CD4-positive, alpha-beta memory T cell (primary cell): ENCODE measurements at regions of chr17 and their contacts with region 1.

Region 1: GRCh38 chr17:43211480-43212402 is at the start of gene TMEM106A:
- DNase-seq: peak; percentile 72 to 76 (median 74)
- H3K4me3 ChIP-seq: peak within 1 kb of the TSS; percentile 82 to 86
- H3K4me3 Mint-ChIP-seq: peak within 1 kb of the TSS; percentile 92 to 100 (median 99)
- H3K27ac ChIP-seq: peak within 1 kb of the TSS; percentile 87
- H3K27ac Mint-ChIP-seq: peak within 1 kb of the TSS; percentile 84 to 99 (median 98)
- H3K4me1 ChIP-seq: peaks cover 22% of the 10 kb centered on the region
- H3K4me1 Mint-ChIP-seq: peaks cover 17 to 43% (median 28%) of the 10 kb centered on the region in 4 donors
- H3K27me3 ChIP-seq: no peaks in the 10 kb centered on the region
- H3K27me3 Mint-ChIP-seq: no peaks in the 10 kb centered on the region
- total RNA-seq, gene TMEM106A: 12.5 to 12.8 TPM

Region 2: DNA sequence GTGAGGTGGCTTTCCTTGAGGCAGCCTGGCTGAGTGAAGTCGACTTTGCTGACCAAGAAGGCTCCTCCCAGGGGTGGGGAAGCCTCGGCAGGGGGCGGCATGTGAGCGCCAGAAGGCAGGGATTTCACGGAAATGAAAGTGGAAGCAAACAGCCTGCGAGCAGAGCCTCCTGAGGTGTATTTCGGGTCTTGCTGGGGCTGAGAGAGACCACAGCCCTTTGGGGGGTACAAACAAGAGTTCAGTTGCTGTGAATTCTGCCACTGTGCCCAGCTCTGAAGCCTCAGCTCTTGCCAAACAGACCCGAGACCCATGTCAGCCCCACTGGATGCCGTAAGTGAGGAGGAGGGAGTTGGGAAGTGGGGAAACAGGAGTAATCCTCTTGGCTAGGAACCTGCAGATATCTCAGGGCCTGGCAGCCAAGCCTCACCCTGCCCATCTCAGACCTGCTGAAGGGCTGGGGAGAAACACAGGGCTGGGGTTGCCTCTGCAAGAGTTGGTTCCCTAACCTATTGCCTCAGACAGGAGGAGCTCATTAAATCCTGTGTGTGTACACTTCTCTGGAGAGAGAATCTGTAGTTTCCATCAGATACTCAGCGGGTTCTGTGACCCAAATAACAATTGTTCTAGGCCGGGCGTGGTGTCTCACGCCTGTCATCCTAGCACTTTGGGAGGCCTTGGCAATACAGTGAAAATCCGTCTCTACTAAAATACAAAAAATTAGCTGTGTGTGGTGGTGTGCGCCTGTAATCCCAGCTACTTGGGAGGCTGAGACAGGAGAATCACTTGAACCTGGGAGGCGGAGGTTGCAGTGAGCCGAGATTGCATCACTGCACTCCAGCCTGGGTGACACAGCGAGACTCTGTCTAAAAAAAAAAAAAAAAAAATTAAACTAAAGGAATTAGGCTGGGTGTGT is 204.8 kb before region 1 on chr17 and contains the start of gene IFI35:
- CTCF ChIA-PET with region 1: interaction called, 4 read pairs
- POLR2A ChIA-PET with region 1: no interaction called
- intact Hi-C with region 1: loop called (anchors 1 kb)
- DNase-seq: peak; percentile 81 to 89 (median 83)
- H3K4me3 ChIP-seq: peak within 1 kb of the TSS; percentile 94 to 95
- H3K4me3 Mint-ChIP-seq: peak within 1 kb of the TSS; percentile 100
- H3K27ac ChIP-seq: peak within 1 kb of the TSS; percentile 90
- H3K27ac Mint-ChIP-seq: peak within 1 kb of the TSS; percentile 96 to 100 (median 99)
- H3K4me1 ChIP-seq: peaks cover 21% of the 10 kb centered on the region
- H3K4me1 Mint-ChIP-seq: peaks cover 8 to 26% (median 17%) of the 10 kb centered on the region in 4 donors
- H3K27me3 ChIP-seq: no peaks in the 10 kb centered on the region
- H3K27me3 Mint-ChIP-seq: no peaks in the 10 kb centered on the region
- total RNA-seq, gene IFI35: 33.1 to 40.3 TPM

Region 3: DNA sequence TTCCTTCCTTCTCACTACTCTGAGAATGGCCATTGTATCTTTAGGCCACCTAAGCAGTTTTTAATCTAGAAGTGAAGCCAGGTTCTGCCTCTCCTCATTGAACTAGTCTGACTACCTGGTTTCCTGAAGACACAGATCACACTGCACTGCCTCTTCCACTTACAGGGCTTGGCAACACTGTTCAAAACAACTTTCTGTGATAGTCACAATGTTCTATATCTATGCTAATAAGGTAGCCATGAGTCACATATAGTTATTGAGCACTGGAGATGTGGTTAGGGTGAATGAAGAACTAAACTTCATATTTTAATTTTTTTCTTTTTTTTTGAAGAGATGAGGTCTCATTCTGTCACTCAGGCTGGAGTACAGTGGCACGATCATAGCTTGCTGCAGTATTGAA is 159.8 kb before region 1 on chr17:
- CTCF ChIA-PET with region 1: no interaction called
- POLR2A ChIA-PET with region 1: no interaction called
- intact Hi-C with region 1: no loop called
- DNase-seq: no peak
- H3K4me3 ChIP-seq: no peak overlapping the region
- H3K4me3 Mint-ChIP-seq: no peak overlapping the region
- H3K27ac ChIP-seq: no peak overlapping the region
- H3K27ac Mint-ChIP-seq: peak overlapping the region in 1 of 7 donors; percentile 12
- H3K4me1 ChIP-seq: no peaks in the 10 kb centered on the region
- H3K4me1 Mint-ChIP-seq: no peaks in the 10 kb centered on the region
- H3K27me3 ChIP-seq: no peaks in the 10 kb centered on the region
- H3K27me3 Mint-ChIP-seq: no peaks in the 10 kb centered on the region

Region 4: GRCh38 chr17:43125133-43125966 is 86.4 kb before region 1 on chr17 and contains the start of gene BRCA1:
- CTCF ChIA-PET with region 1: no interaction called
- POLR2A ChIA-PET with region 1: no interaction called
- intact Hi-C with region 1: loop called (anchors 5 kb)
- DNase-seq: peak; percentile 95 to 98 (median 97)
- H3K4me3 ChIP-seq: peak within 1 kb of the TSS; percentile 80 to 89
- H3K4me3 Mint-ChIP-seq: peak within 1 kb of the TSS; percentile 87 to 98 (median 96)
- H3K27ac ChIP-seq: peak within 1 kb of the TSS; percentile 72
- H3K27ac Mint-ChIP-seq: peak within 1 kb of the TSS; percentile 82 to 98 (median 96)
- H3K4me1 ChIP-seq: peaks cover 17% of the 10 kb centered on the region
- H3K4me1 Mint-ChIP-seq: peaks cover 19 to 35% (median 27%) of the 10 kb centered on the region in 4 donors
- H3K27me3 ChIP-seq: no peaks in the 10 kb centered on the region
- H3K27me3 Mint-ChIP-seq: no peaks in the 10 kb centered on the region
- total RNA-seq, gene BRCA1: 4.8 to 6.0 TPM

Region 5: GRCh38 chr17:43200127-43200526 is 11.6 kb before region 1 on chr17:
- CTCF ChIA-PET with region 1: interaction called, 5 read pairs
- POLR2A ChIA-PET with region 1: interaction called, 23 read pairs
- intact Hi-C with region 1: no loop called
- DNase-seq: no peak
- H3K4me3 ChIP-seq: no peak overlapping the region
- H3K4me3 Mint-ChIP-seq: no peak overlapping the region
- H3K27ac ChIP-seq: no peak overlapping the region
- H3K27ac Mint-ChIP-seq: peak overlapping the region in 2 of 7 donors; percentile 18 to 53
- H3K4me1 ChIP-seq: no peaks in the 10 kb centered on the region
- H3K4me1 Mint-ChIP-seq: peaks cover 0 to 2% (median 0%) of the 10 kb centered on the region in 4 donors
- H3K27me3 ChIP-seq: no peaks in the 10 kb centered on the region
- H3K27me3 Mint-ChIP-seq: no peaks in the 10 kb centered on the region

Region 6: GRCh38 chr17:43338886-43339516 is 127.3 kb after region 1 on chr17:
- CTCF ChIA-PET with region 1: interaction called, 13 read pairs
- POLR2A ChIA-PET with region 1: interaction called, 4 read pairs
- intact Hi-C with region 1: no loop called
- DNase-seq: peak; percentile 45 to 63 (median 53)
- H3K4me3 ChIP-seq: no peak overlapping the region
- H3K4me3 Mint-ChIP-seq: no peak overlapping the region
- H3K27ac ChIP-seq: no peak overlapping the region
- H3K27ac Mint-ChIP-seq: no peak overlapping the region
- H3K4me1 ChIP-seq: peaks cover 2% of the 10 kb centered on the region
- H3K4me1 Mint-ChIP-seq: peaks cover 2 to 16% (median 7%) of the 10 kb centered on the region in 4 donors
- H3K27me3 ChIP-seq: no peaks in the 10 kb centered on the region
- H3K27me3 Mint-ChIP-seq: peaks cover 0 to 5% of the 10 kb centered on the region in 2 donors

Region 7: GRCh38 chr17:43367737-43368242 is 156.0 kb after region 1 on chr17:
- CTCF ChIA-PET with region 1: no interaction called
- POLR2A ChIA-PET with region 1: interaction called, 54 read pairs
- intact Hi-C with region 1: no loop called
- DNase-seq: peak in 2 of 5 donors; percentile 60 to 87
- H3K4me3 ChIP-seq: peak overlapping the region; percentile 1 to 76
- H3K4me3 Mint-ChIP-seq: peak overlapping the region; percentile 91 to 98 (median 95)
- H3K27ac ChIP-seq: peak overlapping the region; percentile 91
- H3K27ac Mint-ChIP-seq: peak overlapping the region; percentile 99 to 100 (median 100)
- H3K4me1 ChIP-seq: peaks cover 22% of the 10 kb centered on the region
- H3K4me1 Mint-ChIP-seq: peaks cover 13 to 50% (median 35%) of the 10 kb centered on the region in 4 donors
- H3K27me3 ChIP-seq: no peaks in the 10 kb centered on the region
- H3K27me3 Mint-ChIP-seq: no peaks in the 10 kb centered on the region

Region 8: DNA sequence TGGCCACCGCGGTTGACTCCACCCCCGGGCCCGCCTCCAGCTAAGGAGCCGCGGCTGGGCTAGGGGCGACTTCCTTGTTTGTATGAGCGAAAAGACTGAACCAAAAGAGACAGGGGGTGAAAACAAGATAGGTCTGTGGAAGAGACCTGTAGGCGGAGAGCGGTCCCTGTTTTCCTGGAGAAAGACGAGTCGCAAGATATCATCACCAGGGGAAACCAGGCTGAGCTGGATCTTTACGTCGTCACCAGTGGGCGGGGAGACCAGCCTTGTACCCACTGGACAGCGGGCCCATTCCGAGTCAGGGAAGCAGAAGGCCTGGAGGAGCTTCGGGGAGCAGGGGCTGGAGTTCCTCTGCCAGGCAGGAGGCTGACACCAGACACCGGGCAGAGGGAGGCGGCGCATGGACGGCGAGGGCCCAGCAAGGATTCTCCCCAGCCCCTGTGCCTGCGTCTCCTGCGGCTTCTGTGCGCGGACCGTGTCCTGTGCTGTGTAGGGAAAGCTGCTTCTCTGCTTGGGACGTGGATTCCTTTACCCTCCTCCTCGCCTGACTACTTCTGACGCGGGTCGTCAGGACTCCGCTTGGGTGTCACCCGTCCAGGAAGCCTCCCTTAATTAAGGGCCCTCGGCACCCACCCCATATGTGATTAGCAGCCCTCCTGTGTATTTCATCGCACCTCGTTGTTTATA is 176.8 kb after region 1 on chr17:
- CTCF ChIA-PET with region 1: no interaction called
- POLR2A ChIA-PET with region 1: interaction called, 13 read pairs
- intact Hi-C with region 1: no loop called
- DNase-seq: peak; percentile 92 to 95 (median 93)
- H3K4me3 ChIP-seq: peak overlapping the region; percentile 73 to 86
- H3K4me3 Mint-ChIP-seq: peak overlapping the region; percentile 92 to 100 (median 97)
- H3K27ac ChIP-seq: peak overlapping the region; percentile 93
- H3K27ac Mint-ChIP-seq: peak overlapping the region; percentile 97 to 100 (median 98)
- H3K4me1 ChIP-seq: peaks cover 19% of the 10 kb centered on the region
- H3K4me1 Mint-ChIP-seq: peaks cover 12 to 35% (median 27%) of the 10 kb centered on the region in 4 donors
- H3K27me3 ChIP-seq: no peaks in the 10 kb centered on the region
- H3K27me3 Mint-ChIP-seq: no peaks in the 10 kb centered on the region